Ascending aorta (tissue), 2 donors: ENCODE measurements at regions of chr4 and their contacts with region 1.

Region 1: GRCh38 chr4:163332500-163333406 is at the start of gene NPY1R:
- DNase-seq: peak; percentile 8 to 88
- H3K4me3 ChIP-seq: peak within 1 kb of the TSS; percentile 73 to 74
- H3K27ac ChIP-seq: peak within 1 kb of the TSS; percentile 73 to 90
- H3K4me1 ChIP-seq: peaks cover 0 to 9% of the 10 kb centered on the region in 2 donors
- H3K27me3 ChIP-seq: no peaks in the 10 kb centered on the region
- CTCF ChIP-seq: peak in 2 of 3 experiments; percentile 62 to 70
- total RNA-seq, gene NPY1R: 248 TPM

Region 2: DNA sequence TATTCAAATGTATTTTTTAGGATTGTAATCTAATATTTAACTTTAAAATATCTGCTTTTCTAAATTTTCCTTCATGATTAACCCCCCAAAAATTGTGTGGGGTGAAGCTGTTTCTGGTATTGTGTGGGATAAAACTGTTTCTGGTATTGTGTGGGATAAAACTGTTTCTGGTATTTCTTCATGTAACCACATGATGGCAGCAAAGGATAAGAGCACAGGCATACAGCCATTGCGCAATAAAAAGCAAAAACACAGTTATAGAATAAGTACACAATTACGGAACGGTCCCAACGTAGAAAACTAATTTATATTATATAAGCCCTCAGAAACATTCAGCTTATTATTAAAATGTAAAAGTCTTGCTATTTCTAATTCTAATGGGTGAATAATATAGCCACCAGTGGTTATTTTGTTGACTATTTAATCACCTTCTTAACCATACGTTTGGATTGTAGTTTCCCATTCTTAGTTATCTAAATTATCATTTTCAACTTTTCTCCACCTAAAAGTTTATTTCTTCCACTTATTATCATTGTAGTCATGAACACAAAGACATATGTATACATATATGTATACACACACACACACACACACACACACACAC is 835.1 kb before region 1 on chr4:
- intact Hi-C with region 1: loop called (anchors 5 kb)
- DNase-seq: no peak
- H3K4me3 ChIP-seq: peak overlapping the region in 1 of 2 donors; percentile 5
- H3K27ac ChIP-seq: no peak overlapping the region
- H3K4me1 ChIP-seq: no peaks in the 10 kb centered on the region
- H3K27me3 ChIP-seq: no peaks in the 10 kb centered on the region
- CTCF ChIP-seq: peak; percentile 67 to 88 (median 77)

Region 3: GRCh38 chr4:162645381-162645780 is 687.4 kb before region 1 on chr4:
- intact Hi-C with region 1: loop called (anchors 5 kb)
- DNase-seq: no peak
- H3K4me3 ChIP-seq: no peak overlapping the region
- H3K27ac ChIP-seq: no peak overlapping the region
- H3K4me1 ChIP-seq: no peaks in the 10 kb centered on the region
- H3K27me3 ChIP-seq: no peaks in the 10 kb centered on the region
- CTCF ChIP-seq: peak in 2 of 3 experiments; percentile 30 to 52

Region 4: GRCh38 chr4:163048447-163048846 is 284.3 kb before region 1 on chr4:
- intact Hi-C with region 1: loop called (anchors 10 kb)
- DNase-seq: no peak
- H3K4me3 ChIP-seq: no peak overlapping the region
- H3K27ac ChIP-seq: no peak overlapping the region
- H3K4me1 ChIP-seq: peaks cover 0 to 9% of the 10 kb centered on the region in 2 donors
- H3K27me3 ChIP-seq: no peaks in the 10 kb centered on the region
- CTCF ChIP-seq: peak in 1 of 3 experiments; percentile 35

Region 5: GRCh38 chr4:163111593-163111992 is 221.2 kb before region 1 on chr4:
- intact Hi-C with region 1: loop called (anchors 5 kb)
- DNase-seq: no peak
- H3K4me3 ChIP-seq: no peak overlapping the region
- H3K27ac ChIP-seq: no peak overlapping the region
- H3K4me1 ChIP-seq: no peaks in the 10 kb centered on the region
- H3K27me3 ChIP-seq: no peaks in the 10 kb centered on the region
- CTCF ChIP-seq: peak in 1 of 3 experiments; percentile 28

Region 6: GRCh38 chr4:163166041-163166579 is 166.6 kb before region 1 on chr4:
- intact Hi-C with region 1: loop called (anchors 2 kb)
- DNase-seq: peak; percentile 10 to 75
- H3K4me3 ChIP-seq: peak overlapping the region; percentile 65 to 85
- H3K27ac ChIP-seq: peak overlapping the region; percentile 92
- H3K4me1 ChIP-seq: peaks cover 0 to 5% of the 10 kb centered on the region in 2 donors
- H3K27me3 ChIP-seq: no peaks in the 10 kb centered on the region
- CTCF ChIP-seq: no peak

Region 7: DNA sequence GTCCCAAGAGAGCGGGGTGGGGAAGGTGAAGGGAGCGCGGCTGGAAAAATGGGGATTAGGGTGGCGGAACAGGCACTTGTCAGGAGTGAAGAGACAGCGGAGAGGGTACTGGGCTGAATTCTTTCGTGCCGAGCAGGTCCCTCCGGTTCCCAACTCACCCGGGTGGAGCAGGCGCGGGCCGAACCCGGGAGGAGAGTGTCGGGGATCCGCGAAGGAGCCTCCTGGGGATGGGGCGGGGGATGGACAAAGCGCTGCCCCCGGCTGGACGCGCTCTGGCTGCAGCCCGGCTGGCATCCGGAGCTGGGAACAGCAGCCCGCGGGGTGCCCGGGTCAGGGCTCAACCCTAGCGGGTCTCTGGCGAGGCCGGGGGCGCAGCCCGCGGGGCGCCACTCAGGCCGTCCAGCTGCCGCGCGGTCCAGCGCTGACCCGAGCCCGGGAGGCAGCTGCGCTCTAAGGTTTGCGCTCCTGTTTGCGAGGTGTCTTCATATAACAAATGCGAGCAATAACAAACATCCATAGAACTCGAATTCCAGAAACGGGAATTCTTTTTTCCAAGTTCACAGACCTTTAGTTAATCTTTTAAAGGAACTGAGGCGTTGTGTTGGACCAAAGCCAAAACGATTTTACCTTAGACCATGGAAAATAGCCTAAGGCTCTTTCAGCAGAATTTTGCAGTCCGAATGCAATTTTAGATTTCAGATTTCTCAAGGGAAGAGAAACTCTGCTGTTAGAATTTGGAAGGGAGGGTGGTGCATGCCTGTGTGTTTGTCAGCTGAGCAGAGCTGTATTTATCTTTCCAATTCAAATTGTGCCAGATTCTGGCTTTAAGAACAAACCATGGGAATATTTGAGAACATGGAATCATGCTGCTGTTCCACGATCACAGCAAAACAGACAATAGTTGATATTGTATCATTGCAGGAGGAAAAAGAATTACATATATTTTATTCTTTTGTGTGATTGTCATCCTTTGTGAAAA is 11.7 kb after region 1 on chr4:
- intact Hi-C with region 1: no loop called
- DNase-seq: no peak
- H3K4me3 ChIP-seq: peak overlapping the region; percentile 77 to 95
- H3K27ac ChIP-seq: peak overlapping the region; percentile 71 to 85
- H3K4me1 ChIP-seq: peaks cover 0 to 3% of the 10 kb centered on the region in 2 donors
- H3K27me3 ChIP-seq: no peaks in the 10 kb centered on the region
- CTCF ChIP-seq: no peak